PC-3 (cell line): ENCODE measurements at regions of chr4 and their contacts with region 1.

Region 1: DNA sequence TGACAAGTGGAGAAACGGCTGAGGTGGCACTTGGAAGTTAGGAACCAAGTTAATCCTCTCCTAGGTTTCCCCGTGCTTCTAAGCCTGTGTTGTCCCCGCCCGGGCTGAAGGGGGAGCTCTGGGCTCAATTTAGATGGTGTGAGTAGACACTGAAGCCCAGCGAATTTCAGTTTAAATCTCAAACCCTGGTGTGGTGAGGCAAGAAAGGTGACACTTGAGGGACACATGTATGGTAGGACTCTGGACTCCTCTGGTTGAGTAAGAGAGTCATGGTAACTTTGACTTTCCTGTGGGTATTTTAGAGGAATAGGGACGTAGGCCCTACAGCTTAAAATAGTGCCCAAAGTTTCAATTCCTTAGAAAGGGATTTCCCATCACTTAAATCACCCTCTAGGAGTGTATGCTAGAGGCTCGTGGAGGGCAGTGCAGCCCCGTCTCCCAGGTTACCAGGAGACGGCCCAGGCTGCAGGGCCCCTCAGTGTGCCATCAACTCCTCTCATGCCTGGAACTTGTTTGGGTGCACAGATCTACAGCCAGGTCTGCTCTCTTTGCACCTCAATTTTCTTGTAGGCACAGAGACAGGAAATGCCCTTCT is 24.0 kb downstream of the HAND2 start:
- DNase-seq: peak; percentile 56
- ATAC-seq: peak; percentile 67
- H3K4me3 ChIP-seq: no peak overlapping the region
- H3K27ac ChIP-seq: no peak overlapping the region
- H3K4me1 ChIP-seq: no peaks in the 10 kb centered on the region
- H3K27me3 ChIP-seq: no peaks in the 10 kb centered on the region
- CTCF ChIP-seq: peak; percentile 74

Region 2: GRCh38 chr4:173565281-173565680 is 59.3 kb after region 1 on chr4:
- CTCF ChIA-PET with region 1: no interaction called
- POLR2A ChIA-PET with region 1: no interaction called
- intact Hi-C with region 1: no loop called
- DNase-seq: no peak
- ATAC-seq: no peak
- H3K4me3 ChIP-seq: no peak overlapping the region
- H3K27ac ChIP-seq: no peak overlapping the region
- H3K4me1 ChIP-seq: no peaks in the 10 kb centered on the region
- H3K27me3 ChIP-seq: peaks cover 23% of the 10 kb centered on the region
- CTCF ChIP-seq: no peak

Region 3: GRCh38 chr4:174096999-174097398 is 591.0 kb after region 1 on chr4:
- CTCF ChIA-PET with region 1: no interaction called
- POLR2A ChIA-PET with region 1: no interaction called
- intact Hi-C with region 1: no loop called
- DNase-seq: no peak
- ATAC-seq: no peak
- H3K4me3 ChIP-seq: no peak overlapping the region
- H3K27ac ChIP-seq: no peak overlapping the region
- H3K4me1 ChIP-seq: no peaks in the 10 kb centered on the region
- H3K27me3 ChIP-seq: peaks cover 28% of the 10 kb centered on the region; the same call in 1 of the 2 replicates
- CTCF ChIP-seq: no peak

Region 4: DNA sequence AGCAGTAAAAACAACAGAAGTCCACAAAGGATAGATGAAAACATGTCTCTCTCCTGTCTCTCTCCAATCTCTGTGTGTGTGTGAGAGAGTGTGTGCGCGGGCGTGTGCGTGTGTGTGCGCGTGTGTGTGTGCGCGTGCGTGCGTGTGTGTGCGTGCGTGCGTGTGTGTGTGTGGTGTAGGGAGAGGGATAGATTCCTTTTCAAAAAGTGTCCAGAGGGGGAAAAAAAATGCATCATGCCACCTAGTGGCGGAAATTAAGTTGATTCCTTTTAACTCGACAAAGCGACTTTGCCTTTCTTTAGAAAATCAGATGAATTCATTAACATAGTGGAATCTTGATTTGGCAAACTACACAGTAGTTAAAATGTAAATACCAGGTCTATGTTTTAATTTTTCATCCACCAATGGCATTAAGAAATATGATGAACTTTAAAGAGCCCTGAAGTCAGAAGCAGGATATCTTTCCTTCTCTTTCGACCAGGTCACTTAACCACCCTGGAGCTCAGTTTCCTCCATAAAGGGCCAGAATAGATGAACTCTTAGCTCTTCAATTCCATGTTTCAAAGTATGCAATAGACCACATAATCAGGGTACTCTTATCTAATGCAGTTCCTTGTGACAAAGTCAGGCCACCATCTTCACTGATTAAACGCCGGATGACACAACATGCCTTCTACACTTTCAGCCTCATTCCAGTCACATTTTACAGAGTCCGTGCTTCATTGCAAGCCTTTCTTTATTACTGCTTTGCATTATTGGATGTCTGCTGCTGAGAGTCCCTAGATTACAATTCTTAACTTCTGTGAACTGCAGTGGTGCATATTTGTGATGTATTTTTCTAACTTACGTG is 614.6 kb after region 1 on chr4:
- CTCF ChIA-PET with region 1: no interaction called
- POLR2A ChIA-PET with region 1: no interaction called
- intact Hi-C with region 1: loop called (anchors 5 kb)
- DNase-seq: peak; percentile 65
- ATAC-seq: peak; percentile 60
- H3K4me3 ChIP-seq: peak overlapping the region; percentile 62
- H3K27ac ChIP-seq: no peak overlapping the region
- H3K4me1 ChIP-seq: 0 out of 2 replicates have a peak, but pooled peaks cover 4% of the 10 kb centered on the region
- H3K27me3 ChIP-seq: peaks cover 71% of the 10 kb centered on the region
- CTCF ChIP-seq: peak; percentile 56